ENCODE measurements at regions of chr9 and their contacts with region 1.

Region 1: DNA sequence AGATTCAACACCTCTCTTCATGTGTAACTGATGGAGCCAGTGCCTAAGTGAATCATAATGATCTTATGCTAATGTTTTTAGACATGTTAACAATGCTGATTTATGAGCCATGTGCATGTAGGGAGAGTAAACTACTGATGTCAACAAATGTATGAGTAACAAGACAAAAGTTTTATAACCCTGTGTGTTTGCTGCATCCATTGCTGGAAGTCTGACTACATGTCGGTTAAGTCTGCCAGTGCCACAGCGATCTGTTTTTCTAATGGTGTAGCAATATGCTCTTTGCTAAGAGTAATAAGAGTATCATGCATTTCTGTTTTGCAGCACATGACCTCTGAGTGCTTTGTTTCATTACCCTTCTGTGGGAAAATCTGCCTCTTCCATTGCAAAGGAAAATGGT is 26.4 kb upstream of the TMOD1 start:
- DNase-seq: no peak
- ATAC-seq: no peak
- H3K4me3 ChIP-seq: no peak overlapping the region
- H3K27ac ChIP-seq: no peak overlapping the region
- H3K4me1 ChIP-seq: no peaks in the 10 kb centered on the region
- CTCF ChIP-seq: no peak
- EP300 ChIP-seq: no peak
- POLR2A ChIP-seq: no peak
- RAD21 ChIP-seq: no peak

Region 2: GRCh38 chr9:97386733-97387503 is 88.1 kb before region 1 on chr9:
- CTCF ChIA-PET with region 1: no interaction called
- POLR2A ChIA-PET with region 1: no interaction called
- DNase-seq: peak; percentile 47 to 77
- ATAC-seq: peak in 1 of 2 experiments; percentile 84; a peak in 3 of 6 replicates
- H3K4me3 ChIP-seq: no peak overlapping the region
- H3K27ac ChIP-seq: no peak overlapping the region
- H3K4me1 ChIP-seq: peaks cover 30% of the 10 kb centered on the region
- CTCF ChIP-seq: peak; percentile 83
- EP300 ChIP-seq: no peak
- POLR2A ChIP-seq: no peak
- RAD21 ChIP-seq: peak; percentile 79 to 92

Region 3: DNA sequence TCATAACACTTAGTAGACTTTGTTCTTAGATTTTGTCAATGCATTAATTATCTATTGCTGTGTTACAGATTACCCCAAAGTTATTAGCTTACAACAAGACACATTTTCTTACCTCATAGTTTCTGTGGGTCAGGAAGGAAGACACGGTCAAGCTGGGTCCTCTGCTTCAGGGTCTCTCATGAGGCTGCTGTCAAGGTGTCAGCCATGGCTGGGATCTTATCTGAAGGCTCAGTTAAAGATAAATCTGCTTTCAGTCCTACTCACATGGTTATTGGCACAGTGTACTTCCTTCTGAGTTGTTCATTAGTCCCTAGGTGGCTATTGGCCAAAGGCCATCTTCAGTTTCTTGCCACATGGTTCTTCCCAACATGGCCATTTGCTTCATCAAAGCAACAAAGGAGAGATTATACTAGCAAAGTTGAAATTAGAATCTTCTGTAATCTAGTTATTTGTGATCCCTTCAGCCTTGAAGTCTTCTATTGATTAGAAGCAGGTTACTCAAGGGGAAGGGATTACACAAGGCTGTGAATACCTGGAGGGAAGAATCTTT is 37.9 kb before region 1 on chr9:
- CTCF ChIA-PET with region 1: no interaction called
- POLR2A ChIA-PET with region 1: no interaction called
- DNase-seq: no peak
- ATAC-seq: no peak
- H3K4me3 ChIP-seq: no peak overlapping the region
- H3K27ac ChIP-seq: no peak overlapping the region
- H3K4me1 ChIP-seq: 0 out of 3 replicates have a peak, but pooled peaks cover 3% of the 10 kb centered on the region
- CTCF ChIP-seq: no peak
- EP300 ChIP-seq: no peak
- POLR2A ChIP-seq: no peak
- RAD21 ChIP-seq: no peak

Region 4: GRCh38 chr9:97459099-97459725 is 15.8 kb before region 1 on chr9:
- CTCF ChIA-PET with region 1: interaction called, 26 read pairs
- POLR2A ChIA-PET with region 1: no interaction called
- DNase-seq: no peak
- ATAC-seq: no peak
- H3K4me3 ChIP-seq: no peak overlapping the region
- H3K27ac ChIP-seq: no peak overlapping the region
- H3K4me1 ChIP-seq: no peaks in the 10 kb centered on the region
- CTCF ChIP-seq: no peak
- EP300 ChIP-seq: no peak
- POLR2A ChIP-seq: no peak
- RAD21 ChIP-seq: no peak

Region 5: GRCh38 chr9:97768736-97769135 is 293.7 kb after region 1 on chr9:
- CTCF ChIA-PET with region 1: no interaction called
- POLR2A ChIA-PET with region 1: no interaction called
- DNase-seq: no peak
- ATAC-seq: no peak
- H3K4me3 ChIP-seq: no peak overlapping the region
- H3K27ac ChIP-seq: no peak overlapping the region
- H3K4me1 ChIP-seq: no peaks in the 10 kb centered on the region
- CTCF ChIP-seq: no peak
- EP300 ChIP-seq: no peak
- POLR2A ChIP-seq: no peak
- RAD21 ChIP-seq: no peak

Measured in A549 (cell line).